ENCODE measurements at regions of chr20 and their contacts with region 1.

Region 1: DNA sequence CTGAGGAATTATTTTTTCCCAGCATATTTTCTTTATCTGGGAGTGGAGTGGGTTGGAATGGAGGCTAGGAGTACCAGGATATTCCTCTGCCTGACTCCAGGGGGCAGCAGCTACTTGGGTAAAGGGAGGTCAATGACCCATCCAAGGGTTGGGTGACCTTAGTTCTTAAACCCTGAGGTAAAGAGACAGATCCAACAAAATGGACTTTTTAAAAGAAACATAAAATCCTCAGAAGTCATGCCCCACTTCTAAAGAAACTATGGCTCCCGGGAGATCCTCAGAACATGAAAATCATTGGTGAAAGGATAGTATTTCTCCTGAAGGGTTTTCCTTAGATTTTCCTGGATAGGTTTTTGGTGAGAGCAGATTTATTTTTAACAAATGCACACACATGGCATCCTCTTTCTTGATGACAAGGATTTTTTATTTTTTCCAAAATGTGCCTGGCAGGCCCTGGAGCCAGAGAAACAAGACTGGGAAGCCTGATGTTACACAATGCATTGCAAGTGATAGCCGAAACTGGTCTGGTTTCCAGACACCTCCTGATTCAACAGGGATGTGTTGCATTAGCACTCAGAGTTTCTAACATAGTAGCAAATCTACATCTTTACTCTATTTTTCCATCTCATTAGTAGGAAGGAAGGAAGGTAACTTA is 240.9 kb upstream of the BTBD3 start:
- DNase-seq: peak; percentile 64
- ATAC-seq: peak; percentile 71
- H3K4me3 ChIP-seq: peak overlapping the region; percentile 52
- H3K27ac ChIP-seq: no peak overlapping the region
- H3K4me1 ChIP-seq: no peaks in the 10 kb centered on the region
- H3K27me3 ChIP-seq: peaks cover 18% of the 10 kb centered on the region; the same call in 1 of the 2 replicates
- CTCF ChIP-seq: peak; percentile 96

Region 2: DNA sequence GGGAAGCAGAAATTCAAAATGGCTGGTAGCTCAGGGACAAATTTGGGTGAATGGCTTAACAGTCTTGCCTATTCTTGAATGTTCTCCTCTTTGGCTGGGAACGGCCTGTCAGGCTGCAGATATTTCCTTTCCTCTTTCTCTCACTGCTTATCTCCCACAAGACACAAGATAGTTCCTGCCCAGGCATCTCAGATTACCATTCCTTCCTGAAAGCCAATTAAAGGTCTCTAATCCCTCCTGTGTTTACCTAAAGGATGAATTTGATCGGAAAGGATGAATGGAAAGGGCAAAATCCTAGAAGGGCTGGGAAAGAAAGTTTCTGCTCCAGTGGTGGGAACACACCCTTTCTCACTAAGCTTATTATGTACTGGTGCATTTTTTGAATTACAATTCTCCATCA is 907.1 kb before region 1 on chr20:
- CTCF ChIA-PET with region 1: no interaction called
- POLR2A ChIA-PET with region 1: no interaction called
- intact Hi-C with region 1: no loop called
- DNase-seq: peak; percentile 47
- ATAC-seq: peak; percentile 25; the same call in 1 of the 2 replicates
- H3K4me3 ChIP-seq: no peak overlapping the region
- H3K27ac ChIP-seq: no peak overlapping the region
- H3K4me1 ChIP-seq: peaks cover 22% of the 10 kb centered on the region
- H3K27me3 ChIP-seq: no peaks in the 10 kb centered on the region
- CTCF ChIP-seq: no peak

Region 3: DNA sequence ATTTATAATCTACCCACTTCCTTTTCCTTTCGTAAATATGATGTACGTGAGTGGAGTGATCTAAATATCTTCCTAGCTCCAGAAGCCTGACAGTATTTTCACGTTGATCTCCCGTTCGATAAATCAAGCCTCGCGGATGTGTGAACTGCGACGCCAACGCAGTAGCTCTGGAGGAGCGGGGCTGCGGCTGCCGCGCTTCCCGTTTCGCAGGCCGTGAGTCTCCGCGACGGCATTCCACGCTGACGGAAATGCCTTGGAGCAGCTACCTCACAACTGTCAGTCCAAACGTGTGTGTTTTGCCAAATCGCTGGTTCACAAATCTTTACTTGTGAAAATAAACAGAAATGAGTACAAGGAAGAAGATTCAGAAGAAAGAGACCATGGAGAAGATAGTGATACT is 282.1 kb after region 1 on chr20:
- CTCF ChIA-PET with region 1: no interaction called
- POLR2A ChIA-PET with region 1: no interaction called
- intact Hi-C with region 1: no loop called
- DNase-seq: no peak
- ATAC-seq: no peak
- H3K4me3 ChIP-seq: no peak overlapping the region
- H3K27ac ChIP-seq: no peak overlapping the region
- H3K4me1 ChIP-seq: no peaks in the 10 kb centered on the region
- H3K27me3 ChIP-seq: peaks cover 17% of the 10 kb centered on the region
- CTCF ChIP-seq: no peak

Region 4: GRCh38 chr20:12353842-12354241 is 677.1 kb after region 1 on chr20:
- CTCF ChIA-PET with region 1: interaction called, 12 read pairs
- POLR2A ChIA-PET with region 1: no interaction called
- intact Hi-C with region 1: no loop called
- DNase-seq: no peak
- ATAC-seq: no peak
- H3K4me3 ChIP-seq: no peak overlapping the region
- H3K27ac ChIP-seq: no peak overlapping the region
- H3K4me1 ChIP-seq: no peaks in the 10 kb centered on the region; the same call in 1 of the 2 replicates
- H3K27me3 ChIP-seq: no peaks in the 10 kb centered on the region
- CTCF ChIP-seq: no peak